ENCODE measurements at regions of chr1 and their contacts with region 1.

Region 1: DNA sequence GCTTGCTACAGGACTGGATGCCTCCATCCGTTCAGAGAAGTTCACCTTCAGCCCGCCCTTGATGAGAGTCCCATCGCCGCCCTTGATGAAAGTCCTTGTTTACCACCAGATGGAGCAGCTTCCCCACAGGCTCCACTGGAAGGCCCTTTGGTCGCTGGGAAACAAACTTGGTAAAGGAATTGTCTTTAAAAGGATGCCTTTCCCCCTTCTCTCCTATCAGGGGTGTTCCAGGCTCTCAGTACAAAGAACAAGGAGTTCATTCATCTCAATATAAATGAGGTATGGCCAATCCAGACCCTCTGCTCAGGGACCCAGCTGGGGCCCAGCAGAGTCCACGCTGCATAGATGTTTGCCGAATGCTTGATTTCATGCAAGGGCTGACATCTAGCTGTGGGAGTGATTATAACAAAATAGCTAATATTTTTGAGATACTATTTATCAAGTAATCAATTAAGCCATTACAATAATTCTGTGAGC is 50.8 kb downstream of the CAPN9 start:
- DNase-seq: peak; percentile 41 to 75
- ATAC-seq: peak; percentile 81 to 93 (median 90)
- H3K4me3 ChIP-seq: no peak overlapping the region
- H3K27ac ChIP-seq: no peak overlapping the region
- H3K4me1 ChIP-seq: no peaks in the 10 kb centered on the region
- H3K27me3 ChIP-seq: no peaks in the 10 kb centered on the region
- CTCF ChIP-seq: peak; percentile 60 to 90 (median 78)

Region 2: GRCh38 chr1:230909974-230910754 is 112.2 kb after region 1 on chr1:
- intact Hi-C with region 1: loop called in 1 of 10 experiments (anchors 2 kb)
- DNase-seq: peak in 1 of 2 donors; percentile 38
- ATAC-seq: peak; percentile 78 to 97 (median 92)
- H3K4me3 ChIP-seq: no peak overlapping the region
- H3K27ac ChIP-seq: peak overlapping the region in 4 of 10 donors; percentile 18 to 50 (median 34)
- H3K4me1 ChIP-seq: peaks cover 0 to 15% (median 5%) of the 10 kb centered on the region in 9 donors
- H3K27me3 ChIP-seq: no peaks in the 10 kb centered on the region
- CTCF ChIP-seq: no peak

Region 3: DNA sequence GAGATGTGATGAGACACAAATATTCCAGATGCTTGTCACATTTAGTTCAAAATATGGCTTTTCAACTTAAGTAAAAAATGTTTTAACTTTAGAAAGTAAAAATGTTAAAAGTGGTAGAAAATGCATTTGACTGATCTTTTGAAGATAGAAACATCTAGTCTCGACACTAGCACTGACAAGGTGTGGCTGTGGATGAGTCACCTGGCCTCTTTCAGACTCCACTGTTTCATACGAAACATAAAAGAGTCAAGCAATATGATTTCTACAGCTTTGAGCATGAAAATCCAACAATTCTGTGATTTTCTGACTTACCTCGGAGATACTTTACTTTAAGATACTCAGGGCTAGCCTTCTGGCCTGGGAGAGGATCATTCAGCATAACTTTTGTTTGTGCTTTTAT is 133.0 kb after region 1 on chr1:
- intact Hi-C with region 1: no loop called
- DNase-seq: no peak
- ATAC-seq: no peak
- H3K4me3 ChIP-seq: no peak overlapping the region
- H3K27ac ChIP-seq: no peak overlapping the region
- H3K4me1 ChIP-seq: no peaks in the 10 kb centered on the region
- H3K27me3 ChIP-seq: no peaks in the 10 kb centered on the region
- CTCF ChIP-seq: no peak